PC-3 (cell line): ENCODE measurements at regions of chr10 and their contacts with region 1.

Region 1: DNA sequence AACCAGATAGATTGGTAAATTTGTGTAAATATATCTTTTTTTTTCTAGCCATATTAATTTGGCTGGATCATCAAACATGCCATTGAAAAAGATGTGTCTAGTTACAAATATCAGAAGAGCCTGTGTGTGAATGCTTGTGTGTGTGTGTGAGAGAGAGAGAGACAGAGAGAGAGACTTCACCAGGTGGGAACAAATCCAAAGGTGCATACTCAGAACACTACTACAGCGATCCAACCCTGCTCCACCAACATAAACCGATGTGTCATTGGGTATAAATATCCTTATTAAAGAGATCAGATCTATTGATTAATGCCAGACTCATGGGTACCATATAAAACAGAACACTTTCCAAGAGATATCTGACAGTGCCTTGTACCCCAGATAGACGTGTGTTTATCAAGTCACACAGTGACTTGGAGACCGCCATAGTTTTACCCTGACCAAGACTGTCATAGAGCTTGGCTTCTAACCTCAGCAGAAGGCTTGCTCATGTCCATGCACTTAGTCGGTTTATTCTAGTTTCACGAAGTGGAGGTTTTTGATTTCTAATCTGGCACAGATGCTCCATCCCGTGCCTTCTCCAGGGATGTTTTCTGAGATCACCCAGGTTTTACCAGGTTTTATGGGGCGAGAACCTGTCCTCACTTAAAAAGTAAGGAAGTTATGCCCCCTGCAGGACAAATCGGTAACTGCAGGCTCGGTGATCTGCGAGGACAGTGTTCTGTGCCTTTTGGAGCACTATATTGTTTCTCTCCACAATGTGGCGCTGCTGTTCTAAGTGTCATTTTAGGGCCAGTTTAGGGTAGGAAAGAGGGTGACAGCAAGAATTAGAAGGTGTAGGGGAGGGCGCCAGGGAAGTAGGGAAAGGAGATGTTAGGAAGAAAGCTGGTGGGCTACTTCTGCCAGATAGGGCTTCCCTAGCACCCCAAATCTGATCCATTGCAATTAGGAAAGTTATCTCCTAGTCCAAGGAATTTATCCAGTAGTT is 29.3 kb upstream of the WNT8B start:
- DNase-seq: peak; percentile 98
- ATAC-seq: peak; percentile 86
- H3K4me3 ChIP-seq: no peak overlapping the region
- H3K27ac ChIP-seq: no peak overlapping the region
- H3K4me1 ChIP-seq: peaks cover 4% of the 10 kb centered on the region; the same call in 1 of the 2 replicates
- H3K27me3 ChIP-seq: no peaks in the 10 kb centered on the region
- CTCF ChIP-seq: peak; percentile 99

Region 2: GRCh38 chr10:100508691-100509150 is 75.2 kb after region 1 on chr10:
- CTCF ChIA-PET with region 1: interaction called, 3 read pairs
- POLR2A ChIA-PET with region 1: no interaction called
- intact Hi-C with region 1: loop called (anchors 1 kb)
- DNase-seq: peak; percentile 67
- ATAC-seq: peak; percentile 79
- H3K4me3 ChIP-seq: no peak overlapping the region
- H3K27ac ChIP-seq: no peak overlapping the region
- H3K4me1 ChIP-seq: peaks cover 5% of the 10 kb centered on the region; the same call in 1 of the 2 replicates
- H3K27me3 ChIP-seq: no peaks in the 10 kb centered on the region
- CTCF ChIP-seq: peak; percentile 68